Astrocyte of the cerebellum (primary cell): ENCODE measurements at regions of chr7 and their contacts with region 1.

Region 1: DNA sequence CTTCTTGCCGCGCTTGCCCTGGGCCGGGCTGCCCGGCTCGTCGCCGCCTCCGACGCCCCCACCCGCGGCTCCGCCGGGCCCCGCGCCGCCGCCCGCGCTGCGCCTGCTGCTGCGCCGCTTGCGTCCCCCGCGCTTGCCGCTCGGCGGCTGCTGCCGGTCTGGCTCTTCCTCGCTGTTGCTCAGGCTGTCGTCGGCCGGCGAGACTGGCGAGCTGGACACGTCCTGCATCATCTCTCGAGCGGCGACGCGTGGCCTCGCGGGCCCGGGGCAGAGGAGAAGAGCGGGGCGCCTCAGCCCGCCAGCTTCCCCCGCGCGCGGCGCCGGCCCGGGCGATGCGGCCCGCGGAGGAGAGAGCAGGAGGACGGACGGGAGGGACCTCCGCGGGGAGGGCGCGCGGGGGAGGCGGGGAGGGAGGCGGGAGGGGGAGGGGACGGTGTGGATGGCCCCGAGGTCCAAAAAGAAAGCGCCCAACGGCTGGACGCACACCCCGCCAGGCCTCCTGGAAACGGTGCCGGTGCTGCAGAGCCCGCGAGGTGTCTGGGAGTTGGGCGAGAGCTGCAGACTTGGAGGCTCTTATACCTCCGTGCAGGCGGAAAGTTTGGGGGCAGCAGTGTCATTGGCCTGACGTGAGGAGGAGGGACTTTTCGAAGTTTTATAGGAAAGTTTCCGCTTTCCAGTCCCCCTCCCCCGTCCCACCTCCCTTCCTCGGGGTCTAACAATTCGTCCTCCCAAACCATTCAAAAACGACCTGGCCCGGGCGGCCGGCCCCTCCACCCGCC is at the start of gene TWIST1:
- DNase-seq: peak; percentile 93
- H3K4me3 ChIP-seq: peak within 1 kb of the TSS; percentile 91
- CTCF ChIP-seq: no peak

Region 2: DNA sequence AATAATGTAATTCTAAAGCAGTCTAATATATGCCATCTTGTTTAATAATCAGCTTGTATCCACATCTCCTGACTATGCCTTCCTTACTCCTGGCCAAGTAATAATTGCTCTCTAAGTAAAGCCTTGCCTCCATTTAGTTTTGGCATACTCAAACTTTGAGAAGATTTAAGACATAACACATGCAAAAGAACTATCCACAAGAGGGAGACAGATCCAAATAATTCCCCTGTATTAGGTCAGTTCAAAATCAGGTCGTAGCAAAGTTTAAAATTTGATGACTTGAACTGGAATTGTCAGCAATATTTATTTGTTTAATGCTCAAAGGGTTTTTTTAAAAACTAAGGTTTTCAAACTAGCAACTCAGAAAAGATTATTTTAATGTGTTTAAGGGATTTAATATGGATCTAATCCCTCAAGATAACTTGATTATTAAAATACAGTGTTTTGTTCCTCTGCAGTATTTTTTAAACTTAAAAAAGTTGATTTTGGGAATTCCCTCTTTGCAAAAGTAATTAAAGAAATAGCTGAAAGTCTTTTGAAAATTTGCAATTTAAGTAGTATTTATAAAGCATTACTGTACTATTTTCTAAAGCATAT is 526.4 kb before region 1 on chr7:
- in situ Hi-C with region 1: loop called (anchors 25 kb)
- DNase-seq: peak; percentile 68
- H3K4me3 ChIP-seq: no peak overlapping the region
- CTCF ChIP-seq: peak; percentile 50

Region 3: GRCh38 chr7:18754766-18755165 is 362.5 kb before region 1 on chr7:
- in situ Hi-C with region 1: loop called (anchors 5 kb)
- DNase-seq: peak; percentile 18
- H3K4me3 ChIP-seq: no peak overlapping the region
- CTCF ChIP-seq: no peak

Region 4: DNA sequence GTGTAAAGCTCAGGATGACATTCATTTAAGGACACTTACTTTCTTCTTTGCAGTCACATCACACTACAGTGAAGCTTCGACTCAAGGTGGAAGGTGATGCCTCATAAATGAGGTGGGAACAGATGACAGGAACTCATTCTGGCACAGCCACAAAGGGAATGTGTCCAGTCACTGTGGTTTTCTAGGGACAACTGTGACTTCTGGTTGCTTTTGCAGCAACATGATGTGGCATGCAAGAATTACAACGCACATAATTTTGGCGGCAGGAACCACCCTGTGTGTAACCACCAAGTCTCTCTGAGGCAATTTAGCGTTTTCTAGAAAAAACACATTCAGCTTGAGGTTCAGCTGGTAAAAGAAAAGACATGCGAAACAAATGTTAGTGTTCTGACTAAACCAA is 60.0 kb after region 1 on chr7:
- in situ Hi-C with region 1: no loop called
- DNase-seq: no peak
- H3K4me3 ChIP-seq: no peak overlapping the region
- CTCF ChIP-seq: no peak